ENCODE measurements at regions of chr6 and their contacts with region 1.

Region 1: DNA sequence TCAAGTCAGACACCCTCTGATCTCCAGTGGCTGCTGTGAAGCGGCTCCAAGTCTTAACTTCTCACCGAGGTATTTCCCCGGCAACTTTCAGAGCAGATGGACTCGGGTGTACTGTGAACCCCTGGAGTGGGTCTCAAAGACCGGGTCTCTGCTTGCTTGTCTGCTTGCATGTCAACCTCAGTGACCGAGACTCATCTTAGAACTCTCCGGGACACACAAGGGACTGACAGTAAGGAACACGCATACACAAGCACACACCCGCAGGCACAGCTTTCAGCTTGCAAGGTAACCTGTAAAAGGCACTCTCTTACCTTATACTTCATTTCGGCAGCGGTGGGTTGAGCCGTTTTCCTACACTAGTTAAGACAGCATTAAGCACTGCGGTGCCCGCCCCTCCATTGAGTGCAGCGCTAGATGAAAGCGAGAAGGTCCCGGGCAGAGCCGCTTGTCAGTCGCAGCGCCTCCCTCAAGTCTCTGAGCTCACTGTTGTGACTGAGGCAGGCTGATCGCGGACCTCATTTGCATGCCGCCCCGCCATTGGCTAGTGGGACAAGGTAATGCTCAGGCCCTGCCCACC is at the start of gene NEDD9:
- DNase-seq: peak; percentile 86
- ATAC-seq: peak; percentile 98
- H3K4me3 ChIP-seq: peak within 1 kb of the TSS; percentile 84
- H3K27ac ChIP-seq: peak within 1 kb of the TSS; percentile 66
- H3K4me1 ChIP-seq: peaks cover 10% of the 10 kb centered on the region; the same call in 1 of the 2 replicates
- H3K27me3 ChIP-seq: no peaks in the 10 kb centered on the region
- CTCF ChIP-seq: no peak
- EP300 ChIP-seq: no peak
- POLR2A ChIP-seq: peak; percentile 96
- RAD21 ChIP-seq: no peak
- polyA plus RNA-seq, gene NEDD9: 4.9 to 6.3 TPM

Region 2: GRCh38 chr6:11212625-11213024 is 19.7 kb before region 1 on chr6:
- CTCF ChIA-PET with region 1: interaction called, 7 read pairs
- POLR2A ChIA-PET with region 1: interaction called, 5 read pairs
- RAD21 ChIA-PET with region 1: interaction called, 5 read pairs
- SMC1A ChIA-PET with region 1: interaction called, 62 read pairs
- in situ Hi-C with region 1: no loop called
- intact Hi-C with region 1: no loop called
- DNase-seq: no peak
- ATAC-seq: no peak
- H3K4me3 ChIP-seq: no peak overlapping the region
- H3K27ac ChIP-seq: no peak overlapping the region
- H3K4me1 ChIP-seq: no peaks in the 10 kb centered on the region
- H3K27me3 ChIP-seq: no peaks in the 10 kb centered on the region
- CTCF ChIP-seq: no peak
- EP300 ChIP-seq: no peak
- POLR2A ChIP-seq: no peak
- RAD21 ChIP-seq: no peak

Region 3: GRCh38 chr6:11251541-11252360 is 19.5 kb after region 1 on chr6:
- CTCF ChIA-PET with region 1: interaction called, 4 read pairs
- POLR2A ChIA-PET with region 1: interaction called, 5 read pairs
- RAD21 ChIA-PET with region 1: interaction called, 9 read pairs
- SMC1A ChIA-PET with region 1: interaction called, 36 read pairs
- in situ Hi-C with region 1: no loop called
- intact Hi-C with region 1: no loop called
- DNase-seq: no peak
- ATAC-seq: peak; percentile 55
- H3K4me3 ChIP-seq: no peak overlapping the region
- H3K27ac ChIP-seq: no peak overlapping the region
- H3K4me1 ChIP-seq: no peaks in the 10 kb centered on the region
- H3K27me3 ChIP-seq: no peaks in the 10 kb centered on the region
- CTCF ChIP-seq: no peak
- EP300 ChIP-seq: no peak
- POLR2A ChIP-seq: no peak
- RAD21 ChIP-seq: no peak

Region 4: GRCh38 chr6:11263291-11263775 is 31.1 kb after region 1 on chr6:
- CTCF ChIA-PET with region 1: interaction called, 4 read pairs
- POLR2A ChIA-PET with region 1: interaction called, 4 read pairs
- RAD21 ChIA-PET with region 1: interaction called, 10 read pairs
- SMC1A ChIA-PET with region 1: interaction called, 46 read pairs
- in situ Hi-C with region 1: no loop called
- intact Hi-C with region 1: no loop called
- DNase-seq: no peak
- ATAC-seq: no peak
- H3K4me3 ChIP-seq: no peak overlapping the region
- H3K27ac ChIP-seq: no peak overlapping the region
- H3K4me1 ChIP-seq: peaks cover 10% of the 10 kb centered on the region
- H3K27me3 ChIP-seq: no peaks in the 10 kb centered on the region
- CTCF ChIP-seq: no peak
- EP300 ChIP-seq: no peak
- POLR2A ChIP-seq: no peak
- RAD21 ChIP-seq: no peak

Region 5: GRCh38 chr6:11374036-11375010 is 142.0 kb after region 1 on chr6:
- CTCF ChIA-PET with region 1: no interaction called
- POLR2A ChIA-PET with region 1: interaction called, 3 read pairs
- RAD21 ChIA-PET with region 1: interaction called, 38 read pairs
- SMC1A ChIA-PET with region 1: interaction called, 56 read pairs
- in situ Hi-C with region 1: no loop called
- intact Hi-C with region 1: loop called (anchors 5 kb)
- DNase-seq: peak; percentile 96
- ATAC-seq: peak; percentile 85
- H3K4me3 ChIP-seq: 0 out of 2 replicates have a peak overlapping the region, but pooled peaks have one; percentile 44
- H3K27ac ChIP-seq: peak overlapping the region; percentile 89
- H3K4me1 ChIP-seq: peaks cover 44% of the 10 kb centered on the region
- H3K27me3 ChIP-seq: no peaks in the 10 kb centered on the region
- CTCF ChIP-seq: no peak
- EP300 ChIP-seq: peak; percentile 83 to 95
- POLR2A ChIP-seq: peak; percentile 43; the same call in 1 of the 2 replicates
- RAD21 ChIP-seq: peak; percentile 25

Measured in GM12878 (cell line).